ENCODE measurements at regions of chr13 and their contacts with region 1.

Region 1: DNA sequence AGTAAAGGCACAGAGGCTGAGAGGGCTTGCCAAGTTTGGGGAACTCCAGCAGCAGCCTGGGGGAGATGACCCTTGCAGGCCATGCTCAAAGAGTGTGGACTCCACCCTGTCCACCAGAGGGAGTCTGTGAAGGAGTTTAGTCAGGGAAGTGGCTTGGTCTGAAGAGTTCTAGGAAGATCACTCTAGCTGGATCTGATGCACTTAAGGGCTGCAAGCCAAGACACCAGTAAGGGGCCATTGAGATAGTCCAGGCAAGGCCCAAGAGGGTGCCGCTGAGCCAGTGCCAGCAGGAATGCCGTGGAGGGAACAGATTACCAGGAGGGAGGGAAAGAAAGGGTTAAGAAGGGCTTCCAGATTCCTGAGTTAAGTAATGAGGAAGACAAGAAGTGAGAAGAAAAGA is 68.7 kb downstream of the ZAR1L start:
- DNase-seq: peak; percentile 50
- ATAC-seq: peak; percentile 90

Region 2: DNA sequence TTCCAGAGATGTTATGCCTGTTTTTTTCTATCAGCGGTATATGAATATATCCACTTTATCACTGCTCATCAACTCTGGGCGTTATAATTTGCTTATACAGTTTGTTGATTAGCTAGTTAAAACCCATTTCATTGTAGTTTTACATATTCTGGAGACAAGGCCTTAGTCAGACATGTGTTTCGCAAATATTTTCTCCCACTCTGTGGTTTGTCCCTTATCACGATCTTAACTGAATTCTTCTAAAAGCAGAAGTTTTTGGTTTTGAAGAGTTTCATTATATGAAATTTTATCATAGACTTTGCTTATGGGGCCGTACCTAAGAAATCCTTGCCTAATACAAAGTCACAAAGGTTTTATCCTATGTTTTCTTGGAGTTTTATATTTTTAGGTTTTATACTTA is 130.3 kb before region 1 on chr13:
- intact Hi-C with region 1: no loop called
- DNase-seq: no peak
- ATAC-seq: no peak

Region 3: DNA sequence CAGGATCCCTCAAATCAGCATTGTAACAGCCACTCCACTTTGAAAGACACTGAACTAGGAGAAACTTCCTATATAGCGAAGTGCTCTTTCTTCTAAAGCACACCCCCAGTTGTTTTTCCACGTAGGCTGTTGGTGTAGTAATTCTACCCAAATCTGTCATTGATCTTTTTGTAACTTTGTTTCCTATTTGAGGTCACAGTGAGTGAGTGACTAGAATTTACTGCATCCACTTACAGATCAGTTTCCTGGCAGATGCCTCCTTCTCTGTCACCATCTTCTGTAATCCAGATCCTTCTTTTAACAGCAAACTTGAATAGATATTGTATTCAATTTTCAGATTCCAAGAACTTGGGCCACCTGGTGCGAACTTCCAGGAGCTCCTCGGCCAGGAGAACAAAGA is 53.4 kb after region 1 on chr13:
- intact Hi-C with region 1: loop called (anchors 2 kb)
- DNase-seq: no peak
- ATAC-seq: no peak

Measured in Right ventricle myocardium superior (tissue), 1 donor.